ENCODE measurements at regions of chr3 and their contacts with region 1.

Region 1: GRCh38 chr3:124791639-124792151 is 61.4 kb downstream of the UMPS start:
- DNase-seq: peak; percentile 99
- H3K4me3 ChIP-seq: peak overlapping the region; percentile 36
- H3K27ac ChIP-seq: peak overlapping the region; percentile 98
- H3K4me1 ChIP-seq: peaks cover 50% of the 10 kb centered on the region
- H3K27me3 ChIP-seq: no peaks in the 10 kb centered on the region

Region 2: GRCh38 chr3:124117486-124117885 is 674.2 kb before region 1 on chr3:
- in situ Hi-C with region 1: no loop called
- DNase-seq: peak; percentile 91
- H3K4me3 ChIP-seq: no peak overlapping the region
- H3K27ac ChIP-seq: no peak overlapping the region; the same call in 1 of the 2 replicates
- H3K4me1 ChIP-seq: peaks cover 44% of the 10 kb centered on the region
- H3K27me3 ChIP-seq: no peaks in the 10 kb centered on the region

Region 3: DNA sequence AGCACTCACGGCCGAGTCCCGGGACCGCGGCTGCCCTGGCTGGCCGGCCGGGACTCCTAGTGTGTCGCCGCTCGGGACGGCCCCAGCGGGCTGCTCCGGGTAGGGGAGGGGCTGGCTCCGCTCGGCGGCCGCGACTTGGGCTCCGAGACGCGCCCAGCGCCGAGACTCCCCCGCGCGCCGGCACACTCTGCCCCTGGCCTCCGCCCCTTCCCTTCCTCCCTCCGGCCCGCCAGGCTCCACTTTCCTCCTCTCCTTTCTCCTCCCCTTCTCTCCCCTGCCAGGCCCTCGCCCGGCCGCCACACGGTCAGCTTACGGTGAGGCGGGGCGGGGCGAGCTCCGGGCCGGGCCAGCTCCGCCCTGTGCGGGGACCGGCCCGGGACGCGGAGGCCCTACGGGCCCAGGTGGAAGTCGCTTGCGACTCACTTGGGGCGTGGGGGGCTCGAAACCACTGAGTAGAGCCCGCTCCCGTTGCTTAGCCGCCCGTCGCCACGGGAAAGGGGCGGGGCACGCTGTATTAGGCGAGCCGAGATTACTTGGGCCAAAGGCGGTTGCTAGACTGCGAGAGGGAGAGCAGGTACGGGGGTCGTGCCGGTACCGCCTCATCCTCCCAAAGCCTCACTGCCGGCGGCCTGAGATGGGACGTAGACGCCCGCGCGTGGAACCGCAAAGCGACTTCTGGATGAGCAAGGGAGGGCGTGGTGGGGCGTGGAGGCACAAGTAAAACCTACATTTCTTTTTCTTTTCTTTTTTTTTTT is 95.7 kb after region 1 on chr3 and contains the start of gene ITGB5:
- in situ Hi-C with region 1: loop called (anchors 10 kb)
- DNase-seq: peak; percentile 91
- H3K4me3 ChIP-seq: peak within 1 kb of the TSS; percentile 87
- H3K27ac ChIP-seq: peak within 1 kb of the TSS; percentile 85
- H3K4me1 ChIP-seq: peaks cover 25% of the 10 kb centered on the region
- H3K27me3 ChIP-seq: no peaks in the 10 kb centered on the region
- total RNA-seq, gene ITGB5: 383 and 523 TPM in 2 replicates

Region 4: DNA sequence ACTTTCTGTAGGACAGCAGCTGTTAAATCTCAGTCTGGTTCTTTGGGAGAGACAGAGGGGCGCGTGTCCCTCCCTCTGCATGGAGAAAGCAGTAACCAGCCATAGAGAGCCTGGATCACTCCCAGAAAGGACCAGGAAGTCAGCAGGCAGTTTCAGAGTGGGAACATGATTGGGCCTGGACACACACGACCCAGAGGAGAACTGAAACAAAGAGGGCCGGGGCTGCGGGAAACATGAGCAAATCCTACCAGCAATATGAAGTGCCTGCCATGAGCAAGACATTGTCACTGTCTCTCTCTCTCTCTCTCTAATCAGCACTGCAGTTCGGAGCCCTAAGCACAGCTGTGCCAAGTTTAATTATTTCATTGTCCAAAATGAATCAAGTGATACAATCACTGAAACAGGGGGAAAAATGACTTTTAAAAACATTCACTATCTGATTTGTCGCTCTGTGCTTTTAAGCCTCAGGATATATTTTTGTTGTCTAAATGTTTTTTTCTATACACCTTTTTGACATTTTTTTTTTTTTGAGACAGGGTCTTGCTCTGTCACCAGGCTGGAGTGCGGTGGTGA is 125.2 kb after region 1 on chr3:
- in situ Hi-C with region 1: no loop called
- DNase-seq: no peak
- H3K4me3 ChIP-seq: no peak overlapping the region
- H3K27ac ChIP-seq: no peak overlapping the region
- H3K4me1 ChIP-seq: no peaks in the 10 kb centered on the region
- H3K27me3 ChIP-seq: peaks cover 6% of the 10 kb centered on the region; the same call in 1 of the 2 replicates